Activated CD8-positive, alpha-beta T cell treated with anti-CD3 and anti-CD28 coated beads, Interleukin-2, amount 10 ng/mL, durations not matched to agents 7 days and 5 days (primary cell): ENCODE measurements at regions of chr9 and their contacts with region 1.

Region 1: DNA sequence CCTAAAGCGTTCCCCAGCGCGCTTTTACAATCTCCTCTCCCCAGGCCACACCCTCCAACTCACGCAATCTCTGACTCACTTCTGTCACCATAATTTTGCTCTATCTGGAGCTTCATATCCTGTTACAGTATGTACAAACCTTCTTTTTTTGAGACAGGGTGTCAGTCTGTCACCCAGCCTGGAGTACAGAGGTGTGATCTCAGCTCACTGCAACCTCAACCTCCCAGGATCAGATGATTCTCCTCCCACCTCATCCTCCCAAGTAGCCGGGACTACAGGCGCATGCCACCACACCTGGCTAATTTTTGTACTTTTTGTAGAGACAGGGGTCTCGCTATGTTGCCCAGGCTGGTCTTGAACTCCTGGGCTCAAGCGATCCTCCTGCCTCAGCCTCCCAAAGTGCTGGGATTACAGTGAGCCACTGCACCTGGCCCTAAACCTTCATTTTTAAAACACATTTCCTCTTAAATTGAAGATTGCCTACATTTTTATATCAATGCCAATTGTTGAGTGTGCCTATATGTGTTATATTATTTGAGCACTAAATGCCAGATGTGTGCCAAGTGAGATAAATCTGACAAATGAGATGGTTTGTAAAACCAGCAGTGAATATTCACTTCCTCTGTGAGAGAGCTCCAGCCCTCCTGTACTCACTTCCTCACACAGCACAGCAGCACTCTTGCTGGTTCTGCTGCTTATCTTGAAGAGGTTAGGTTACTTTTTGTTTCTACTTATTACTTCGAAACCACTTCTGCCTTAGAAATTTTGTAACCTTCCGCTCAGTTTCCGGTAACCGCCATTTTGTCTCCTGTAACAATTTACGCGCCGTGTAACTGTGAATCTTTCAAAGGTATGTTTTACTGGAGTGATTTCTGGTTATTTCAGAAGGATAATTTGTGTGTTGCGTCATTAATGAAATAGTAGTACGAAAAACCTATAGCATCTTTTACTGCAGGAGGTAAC is 57.9 kb downstream of the DOCK8 start:
- DNase-seq: peak; percentile 91
- ATAC-seq: peak; percentile 83
- H3K4me3 Mint-ChIP-seq: peak overlapping the region; percentile 83
- H3K27ac Mint-ChIP-seq: peak overlapping the region; percentile 99
- H3K4me1 Mint-ChIP-seq: peaks cover 63% of the 10 kb centered on the region
- H3K27me3 Mint-ChIP-seq: no peaks in the 10 kb centered on the region

Region 2: GRCh38 chr9:214648-215493 is 57.7 kb before region 1 on chr9 and contains the start of gene DOCK8:
- CTCF ChIA-PET with region 1: interaction called, 19 read pairs
- POLR2A ChIA-PET with region 1: interaction called, 122 read pairs
- DNase-seq: peak; percentile 77
- ATAC-seq: peak; percentile 90
- H3K4me3 Mint-ChIP-seq: peak within 1 kb of the TSS; percentile 88
- H3K27ac Mint-ChIP-seq: peak within 1 kb of the TSS; percentile 89
- H3K4me1 Mint-ChIP-seq: peaks cover 35% of the 10 kb centered on the region
- H3K27me3 Mint-ChIP-seq: no peaks in the 10 kb centered on the region
- total RNA-seq, gene DOCK8: 386 to 389 TPM

Region 3: GRCh38 chr9:224582-225520 is 47.7 kb before region 1 on chr9:
- CTCF ChIA-PET with region 1: interaction called, 8 read pairs
- POLR2A ChIA-PET with region 1: interaction called, 35 read pairs
- DNase-seq: no peak
- ATAC-seq: peak; percentile 45
- H3K4me3 Mint-ChIP-seq: no peak overlapping the region
- H3K27ac Mint-ChIP-seq: no peak overlapping the region
- H3K4me1 Mint-ChIP-seq: peaks cover 47% of the 10 kb centered on the region
- H3K27me3 Mint-ChIP-seq: no peaks in the 10 kb centered on the region

Region 4: GRCh38 chr9:242461-243080 is 30.0 kb before region 1 on chr9:
- CTCF ChIA-PET with region 1: interaction called, 3 read pairs
- POLR2A ChIA-PET with region 1: interaction called, 25 read pairs
- DNase-seq: peak; percentile 48
- ATAC-seq: peak; percentile 82
- H3K4me3 Mint-ChIP-seq: peak overlapping the region; percentile 52
- H3K27ac Mint-ChIP-seq: peak overlapping the region; percentile 82
- H3K4me1 Mint-ChIP-seq: peaks cover 68% of the 10 kb centered on the region
- H3K27me3 Mint-ChIP-seq: no peaks in the 10 kb centered on the region

Region 5: GRCh38 chr9:469672-470551 is 197.4 kb after region 1 on chr9:
- CTCF ChIA-PET with region 1: no interaction called
- POLR2A ChIA-PET with region 1: no interaction called
- DNase-seq: peak; percentile 93
- ATAC-seq: peak; percentile 92
- H3K4me3 Mint-ChIP-seq: peak overlapping the region; percentile 85
- H3K27ac Mint-ChIP-seq: peak overlapping the region; percentile 93
- H3K4me1 Mint-ChIP-seq: peaks cover 32% of the 10 kb centered on the region
- H3K27me3 Mint-ChIP-seq: no peaks in the 10 kb centered on the region